CD14-positive monocyte (primary cell): ENCODE measurements at regions of chr13 and their contacts with region 1.

Region 1: DNA sequence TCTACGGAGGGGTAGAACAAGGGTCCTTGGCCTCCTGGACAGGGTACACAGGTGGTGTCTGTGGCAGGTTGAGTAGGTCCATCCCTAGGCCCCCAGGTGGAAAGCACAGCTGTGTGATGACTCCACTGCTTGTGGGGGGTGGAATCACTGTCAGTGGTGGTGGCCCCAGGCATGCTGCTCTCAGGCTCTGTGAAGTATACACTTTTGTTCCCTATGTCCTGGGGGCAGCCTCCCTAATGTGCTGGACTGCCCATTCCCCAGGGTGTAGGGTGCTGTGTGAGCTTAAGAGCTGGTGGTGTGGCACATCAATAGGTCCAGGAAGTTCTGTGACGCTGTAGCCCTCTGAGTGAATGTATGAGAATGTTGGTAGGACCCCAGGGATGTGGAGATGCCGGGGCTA is 197.2 kb upstream of the SLC10A2 start:
- DNase-seq: no peak
- H3K4me3 ChIP-seq: no peak overlapping the region
- H3K4me3 Mint-ChIP-seq: no peak overlapping the region
- H3K27ac ChIP-seq: no peak overlapping the region
- H3K27ac Mint-ChIP-seq: no peak overlapping the region
- H3K4me1 ChIP-seq: no peaks in the 10 kb centered on the region
- H3K4me1 Mint-ChIP-seq: no peaks in the 10 kb centered on the region
- H3K27me3 ChIP-seq: no peaks in the 10 kb centered on the region
- H3K27me3 Mint-ChIP-seq: no peaks in the 10 kb centered on the region
- CTCF ChIP-seq: no peak

Region 2: DNA sequence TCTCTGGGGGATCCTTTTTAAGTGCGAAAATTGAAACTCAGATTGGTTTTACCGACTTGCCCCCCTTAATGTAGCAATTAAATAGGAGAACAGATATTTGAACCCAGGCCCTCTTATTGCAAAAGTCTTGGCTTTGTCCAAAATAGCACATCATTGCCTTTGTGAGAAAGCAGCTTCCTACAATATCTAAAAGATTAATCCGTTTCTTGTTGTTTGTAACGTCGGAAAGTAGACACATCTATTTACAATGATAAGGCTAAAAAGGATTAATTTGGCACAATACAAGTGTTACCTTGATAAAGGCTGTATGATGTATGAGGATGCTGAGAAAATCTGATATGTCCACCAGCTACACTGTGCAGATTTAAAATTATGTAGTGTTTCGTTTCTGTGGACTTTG is 88.5 kb before region 1 on chr13:
- intact Hi-C with region 1: loop called in 1 of 2 experiments (anchors 5 kb)
- DNase-seq: no peak
- H3K4me3 ChIP-seq: no peak overlapping the region
- H3K4me3 Mint-ChIP-seq: no peak overlapping the region
- H3K27ac ChIP-seq: no peak overlapping the region
- H3K27ac Mint-ChIP-seq: no peak overlapping the region
- H3K4me1 ChIP-seq: no peaks in the 10 kb centered on the region
- H3K4me1 Mint-ChIP-seq: no peaks in the 10 kb centered on the region
- H3K27me3 ChIP-seq: no peaks in the 10 kb centered on the region
- H3K27me3 Mint-ChIP-seq: no peaks in the 10 kb centered on the region
- CTCF ChIP-seq: no peak

Region 3: GRCh38 chr13:103451656-103452055 is 188.2 kb after region 1 on chr13:
- intact Hi-C with region 1: no loop called
- DNase-seq: no peak
- H3K4me3 ChIP-seq: no peak overlapping the region
- H3K4me3 Mint-ChIP-seq: no peak overlapping the region
- H3K27ac ChIP-seq: no peak overlapping the region
- H3K27ac Mint-ChIP-seq: no peak overlapping the region
- H3K4me1 ChIP-seq: no peaks in the 10 kb centered on the region
- H3K4me1 Mint-ChIP-seq: no peaks in the 10 kb centered on the region
- H3K27me3 ChIP-seq: no peaks in the 10 kb centered on the region
- H3K27me3 Mint-ChIP-seq: peaks cover 0 to 1% (median 0%) of the 10 kb centered on the region in 3 donors
- CTCF ChIP-seq: no peak